HCT116 (cell line): ENCODE measurements at regions of chr11 and their contacts with region 1.

Region 1: DNA sequence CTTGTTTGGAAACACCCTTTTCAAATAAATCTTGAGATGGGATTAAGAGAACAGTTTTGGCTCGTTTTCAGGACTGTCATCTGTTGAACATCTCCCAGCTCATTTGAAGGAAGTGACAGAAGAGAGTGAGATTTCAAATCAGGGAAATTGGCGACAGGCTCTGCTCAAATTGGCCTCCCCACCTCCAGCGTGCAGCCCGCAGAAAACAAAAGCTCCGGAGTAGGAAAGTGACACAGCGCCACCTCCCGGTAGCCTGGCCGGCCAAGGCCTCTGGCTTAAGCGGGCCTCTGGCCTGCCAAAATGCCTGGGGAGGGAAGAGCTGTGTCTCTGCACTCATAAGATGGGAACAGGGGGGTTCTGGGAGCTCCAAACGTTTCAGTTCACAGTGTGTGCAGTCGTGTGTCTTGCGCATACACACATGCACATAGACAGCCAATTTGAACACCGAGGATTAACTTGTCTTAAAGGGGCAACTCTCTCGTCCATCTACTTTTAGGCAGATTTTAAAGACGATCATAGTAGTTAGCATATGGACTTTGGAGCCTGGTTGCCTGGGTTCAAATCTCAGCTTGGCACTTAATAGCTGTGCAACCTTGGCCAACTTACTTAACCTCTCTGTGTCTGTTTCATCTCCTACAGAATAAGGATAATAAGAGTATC is 132.7 kb upstream of the RCN1 start:
- DNase-seq: peak; percentile 40
- ATAC-seq: peak; percentile 96
- H3K4me3 ChIP-seq: no peak overlapping the region
- H3K27ac ChIP-seq: no peak overlapping the region
- H3K4me1 ChIP-seq: peaks cover 0 to 4% of the 10 kb centered on the region in 2 experiments; a peak in 1 of 4 replicates
- H3K27me3 ChIP-seq: no peaks in the 10 kb centered on the region
- CTCF ChIP-seq: peak; percentile 71 to 96 (median 94)
- POLR2A ChIP-seq: no peak
- RAD21 ChIP-seq: peak; percentile 79

Region 2: GRCh38 chr11:31397239-31397834 is 560.9 kb before region 1 on chr11:
- CTCF ChIA-PET with region 1: interaction called, 3 read pairs
- POLR2A ChIA-PET with region 1: no interaction called
- RAD21 ChIA-PET with region 1: interaction called in 1 of 2 experiments, 3 read pairs
- intact Hi-C with region 1: loop called (anchors 1 kb)
- DNase-seq: no peak
- ATAC-seq: no peak
- H3K4me3 ChIP-seq: no peak overlapping the region
- H3K27ac ChIP-seq: no peak overlapping the region
- H3K4me1 ChIP-seq: no peaks in the 10 kb centered on the region
- H3K27me3 ChIP-seq: no peaks in the 10 kb centered on the region
- CTCF ChIP-seq: peak; percentile 37 to 72 (median 51); a peak in 4 of 6 replicates
- POLR2A ChIP-seq: no peak
- RAD21 ChIP-seq: peak; percentile 59

Region 3: GRCh38 chr11:31641477-31642062 is 316.6 kb before region 1 on chr11:
- CTCF ChIA-PET with region 1: interaction called, 10 read pairs
- POLR2A ChIA-PET with region 1: no interaction called
- RAD21 ChIA-PET with region 1: no interaction called
- intact Hi-C with region 1: loop called (anchors 2 kb)
- DNase-seq: peak; percentile 39
- ATAC-seq: peak; percentile 69; the same call in 1 of the 2 replicates
- H3K4me3 ChIP-seq: no peak overlapping the region
- H3K27ac ChIP-seq: no peak overlapping the region
- H3K4me1 ChIP-seq: peaks cover 8 to 13% of the 10 kb centered on the region in 2 experiments
- H3K27me3 ChIP-seq: no peaks in the 10 kb centered on the region
- CTCF ChIP-seq: peak; percentile 43 to 72 (median 69); a peak in 5 of 6 replicates
- POLR2A ChIP-seq: no peak
- RAD21 ChIP-seq: peak; percentile 60

Region 4: GRCh38 chr11:31968461-31969358 is 10.5 kb after region 1 on chr11:
- CTCF ChIA-PET with region 1: interaction called, 16 read pairs
- POLR2A ChIA-PET with region 1: no interaction called
- RAD21 ChIA-PET with region 1: no interaction called
- intact Hi-C with region 1: no loop called
- DNase-seq: no peak
- ATAC-seq: no peak
- H3K4me3 ChIP-seq: no peak overlapping the region
- H3K27ac ChIP-seq: no peak overlapping the region
- H3K4me1 ChIP-seq: no peaks in the 10 kb centered on the region
- H3K27me3 ChIP-seq: no peaks in the 10 kb centered on the region
- CTCF ChIP-seq: no peak
- POLR2A ChIP-seq: no peak
- RAD21 ChIP-seq: no peak